Activated CD8-positive, alpha-beta T cell treated with anti-CD3 and anti-CD28 coated beads for 36 hours (primary cell): ENCODE measurements at regions of chr14 and their contacts with region 1.

Region 1: DNA sequence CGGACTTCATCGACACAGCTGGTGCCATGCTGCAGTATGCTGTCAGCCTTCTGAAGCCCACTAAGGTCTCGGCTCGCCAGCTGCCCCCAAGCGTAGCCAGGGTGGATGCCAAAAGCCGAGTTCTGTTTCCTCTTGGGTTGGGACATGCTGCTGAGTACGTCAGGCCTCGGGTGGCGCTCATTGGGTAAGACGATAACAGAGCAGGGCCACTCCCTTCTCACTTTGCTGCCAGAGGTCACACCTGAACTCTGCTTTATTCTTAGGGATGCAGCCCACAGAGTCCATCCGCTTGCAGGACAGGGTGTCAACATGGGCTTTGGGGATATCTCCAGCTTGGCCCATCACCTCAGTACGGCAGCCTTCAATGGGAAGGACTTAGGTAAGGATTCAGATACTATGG is 11.1 kb downstream of the COQ6 start:
- DNase-seq: no peak
- ATAC-seq: no peak
- H3K4me3 Mint-ChIP-seq: no peak overlapping the region
- H3K27ac Mint-ChIP-seq: no peak overlapping the region
- H3K4me1 Mint-ChIP-seq: no peaks in the 10 kb centered on the region
- H3K27me3 Mint-ChIP-seq: no peaks in the 10 kb centered on the region
- CTCF ChIP-seq: no peak

Region 2: DNA sequence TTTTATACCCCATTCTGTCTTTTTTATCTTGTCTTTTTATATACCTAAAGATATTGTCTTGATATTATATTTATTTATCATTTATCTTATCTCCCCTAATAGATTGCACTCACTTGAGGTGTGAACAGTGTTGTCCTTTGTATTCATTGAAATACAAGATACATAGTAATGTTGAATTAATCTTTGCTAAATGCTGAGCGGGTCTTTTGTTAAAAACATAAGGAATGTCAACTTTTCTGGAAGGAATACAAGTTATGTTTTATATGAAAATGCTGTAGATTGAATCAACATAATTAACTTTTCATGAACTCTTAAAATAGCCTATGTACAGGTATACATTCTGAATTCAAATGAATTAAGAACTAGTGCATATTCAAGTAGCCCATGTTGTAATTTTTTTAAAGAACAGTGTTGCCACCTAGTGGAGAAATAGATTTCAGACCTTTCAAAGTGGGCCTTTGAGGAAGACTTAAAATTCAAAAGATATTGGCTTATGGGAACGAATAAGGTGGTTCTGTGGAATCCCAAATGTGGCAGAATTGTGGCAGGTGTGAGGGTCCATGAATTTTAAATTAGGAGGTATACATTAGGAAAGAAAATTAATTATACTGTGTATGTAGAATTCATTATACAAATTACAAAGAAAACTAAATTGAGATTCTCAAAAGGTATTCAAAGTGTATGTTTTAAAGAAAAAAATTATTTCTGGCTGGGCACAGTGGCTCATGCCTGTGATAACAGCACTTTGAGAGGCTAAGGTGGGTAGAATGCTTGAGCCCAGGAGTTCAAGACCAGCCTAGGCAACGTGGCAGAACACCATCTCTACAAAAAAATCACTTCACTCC is 77.0 kb after region 1 on chr14:
- CTCF ChIA-PET with region 1: no interaction called
- POLR2A ChIA-PET with region 1: no interaction called
- intact Hi-C with region 1: loop called (anchors 10 kb)
- DNase-seq: no peak
- ATAC-seq: no peak
- H3K4me3 Mint-ChIP-seq: no peak overlapping the region
- H3K27ac Mint-ChIP-seq: no peak overlapping the region
- H3K4me1 Mint-ChIP-seq: no peaks in the 10 kb centered on the region
- H3K27me3 Mint-ChIP-seq: no peaks in the 10 kb centered on the region
- CTCF ChIP-seq: peak; percentile 81